AG04450 (cell line): ENCODE measurements at regions of chr11 and their contacts with region 1.

Region 1: GRCh38 chr11:77547863-77548551 is 41.7 kb upstream of the AQP11 start:
- DNase-seq: peak; percentile 50
- H3K4me3 ChIP-seq: no peak overlapping the region
- H3K27ac ChIP-seq: no peak overlapping the region
- H3K27me3 ChIP-seq: no peaks in the 10 kb centered on the region
- CTCF ChIP-seq: peak; percentile 74

Region 2: DNA sequence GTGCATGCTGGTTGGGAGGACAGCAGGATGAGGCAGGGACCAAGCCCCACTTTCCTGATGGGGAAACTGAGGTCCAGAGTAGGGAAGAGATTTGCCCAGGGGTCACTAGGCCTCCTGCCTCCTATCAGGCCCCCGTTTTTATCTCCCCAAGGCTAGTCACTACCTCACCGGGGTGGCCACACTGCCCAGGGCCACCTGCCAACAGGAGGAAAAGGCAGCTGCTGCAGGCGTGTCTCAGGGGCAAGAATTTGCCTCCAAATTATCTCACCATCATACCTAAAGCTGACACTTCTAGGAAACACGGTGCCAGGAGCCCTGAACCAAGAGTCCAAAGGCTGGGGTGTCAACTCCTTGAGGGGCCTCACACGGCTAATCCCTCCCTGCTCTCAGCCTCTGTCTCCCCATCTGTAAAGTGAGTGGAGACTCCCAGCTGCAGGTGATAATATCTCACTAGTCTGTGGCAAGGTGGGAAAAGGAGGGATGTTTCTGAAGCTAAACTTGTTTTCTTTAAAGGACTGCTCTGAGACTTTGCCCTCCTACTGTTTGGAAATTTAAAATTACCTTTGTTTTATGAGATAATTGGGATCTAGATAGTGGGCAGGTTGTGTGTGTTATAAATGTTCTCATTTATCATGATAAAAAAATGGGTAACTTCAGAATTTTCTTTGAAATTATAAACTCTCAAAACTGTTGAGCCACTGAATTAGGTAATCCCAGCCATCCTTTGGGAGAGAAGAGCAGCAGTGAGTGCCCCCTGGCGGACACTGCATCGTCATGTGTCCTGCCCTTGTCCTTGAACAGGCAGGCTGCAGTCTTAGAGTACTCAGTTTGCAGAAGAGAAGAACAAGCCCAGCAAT is 360.0 kb before region 1 on chr11:
- CTCF ChIA-PET with region 1: interaction called, 25 read pairs
- POLR2A ChIA-PET with region 1: no interaction called
- DNase-seq: peak; percentile 53
- H3K4me3 ChIP-seq: no peak overlapping the region
- H3K27ac ChIP-seq: no peak overlapping the region
- H3K27me3 ChIP-seq: peaks cover 17% of the 10 kb centered on the region
- CTCF ChIP-seq: peak; percentile 95

Region 3: DNA sequence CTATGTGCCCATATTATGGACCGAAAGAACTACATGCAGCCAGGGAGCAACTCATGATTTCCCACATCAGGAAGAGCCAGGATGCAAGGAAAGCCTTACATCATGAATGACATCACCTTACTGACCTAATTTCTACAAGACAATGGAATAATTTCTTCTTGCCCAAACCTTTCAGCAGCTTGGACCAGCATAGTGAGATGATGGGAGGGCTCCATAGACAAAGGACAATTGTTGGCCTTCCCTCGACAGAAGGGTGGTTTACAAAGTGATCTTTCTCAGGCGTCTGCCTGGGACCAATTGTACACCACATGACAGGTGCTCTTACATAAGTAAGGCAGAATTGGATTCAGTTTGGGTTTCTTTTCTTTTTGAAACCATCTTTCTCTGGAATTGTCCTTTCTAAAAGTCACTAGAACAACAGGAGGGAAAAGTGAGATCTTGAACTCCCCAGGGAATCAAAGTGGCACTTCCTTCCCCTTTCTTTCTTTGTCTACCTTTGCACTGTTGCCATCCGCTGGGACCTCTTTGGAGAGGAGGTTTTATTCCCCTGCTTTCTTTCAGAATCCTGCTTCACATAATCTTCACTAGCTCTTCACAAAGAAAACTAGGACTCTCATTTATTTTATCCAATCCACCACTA is 22.4 kb before region 1 on chr11:
- CTCF ChIA-PET with region 1: interaction called, 15 read pairs
- POLR2A ChIA-PET with region 1: no interaction called
- DNase-seq: no peak
- H3K4me3 ChIP-seq: no peak overlapping the region
- H3K27ac ChIP-seq: no peak overlapping the region
- H3K27me3 ChIP-seq: no peaks in the 10 kb centered on the region
- CTCF ChIP-seq: no peak

Region 4: GRCh38 chr11:77580712-77581337 is 32.8 kb after region 1 on chr11:
- CTCF ChIA-PET with region 1: interaction called, 11 read pairs
- POLR2A ChIA-PET with region 1: no interaction called
- DNase-seq: no peak
- H3K4me3 ChIP-seq: no peak overlapping the region
- H3K27ac ChIP-seq: no peak overlapping the region
- H3K27me3 ChIP-seq: no peaks in the 10 kb centered on the region
- CTCF ChIP-seq: no peak